GM10248 (cell line): ENCODE measurements at regions of chr17 and their contacts with region 1.

Region 1: GRCh38 chr17:46940621-46941404 is 17.9 kb downstream of the GOSR2 start:
- DNase-seq: peak; percentile 81
- CTCF ChIP-seq: peak; percentile 89

Region 2: GRCh38 chr17:46910179-46910927 is 30.5 kb before region 1 on chr17:
- CTCF ChIA-PET with region 1: interaction called, 14 read pairs
- POLR2A ChIA-PET with region 1: no interaction called
- DNase-seq: no peak
- CTCF ChIP-seq: no peak

Region 3: DNA sequence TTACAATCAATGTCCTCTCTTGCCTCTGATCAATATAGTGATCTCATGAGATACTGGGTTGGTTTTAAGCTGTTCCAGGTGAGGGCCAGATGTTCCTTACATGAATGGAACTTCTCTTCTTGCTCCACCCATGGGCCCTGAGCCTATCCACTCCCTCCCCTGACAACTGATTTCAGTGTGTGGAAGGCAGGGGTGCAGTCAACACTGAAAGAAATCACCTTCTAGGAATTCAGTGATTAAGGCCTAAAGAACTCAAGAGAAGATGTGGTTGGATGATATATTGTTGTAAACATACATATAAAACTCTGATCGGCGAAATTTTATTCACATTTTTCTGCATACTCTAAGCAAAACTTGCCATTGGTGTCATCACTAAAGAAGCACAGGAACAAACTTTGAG is 24.6 kb before region 1 on chr17:
- CTCF ChIA-PET with region 1: interaction called, 14 read pairs
- POLR2A ChIA-PET with region 1: no interaction called
- DNase-seq: no peak
- CTCF ChIP-seq: no peak

Region 4: GRCh38 chr17:46922804-46923635 is 17.8 kb before region 1 on chr17 and contains the start of gene GOSR2:
- CTCF ChIA-PET with region 1: interaction called, 23 read pairs
- POLR2A ChIA-PET with region 1: no interaction called
- DNase-seq: peak; percentile 95
- CTCF ChIP-seq: no peak

Region 5: DNA sequence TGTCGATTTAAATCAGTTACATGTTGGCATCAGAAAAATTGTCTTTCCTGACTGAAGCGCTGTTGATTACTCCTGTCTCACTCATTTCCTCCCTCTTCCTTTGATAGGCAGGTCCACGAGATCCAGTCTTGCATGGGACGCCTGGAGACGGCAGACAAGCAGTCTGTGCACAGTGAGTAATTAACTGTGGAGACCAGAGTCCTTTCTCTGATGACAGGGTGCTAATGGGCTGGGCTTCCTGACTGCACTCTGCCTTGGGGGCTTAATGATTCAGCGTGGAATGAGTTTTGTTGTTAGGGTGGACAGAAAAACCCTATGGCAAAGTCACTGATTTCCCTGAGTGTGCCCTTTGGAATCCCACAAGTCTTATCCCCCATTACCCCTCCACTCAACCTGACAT is 11.4 kb before region 1 on chr17:
- CTCF ChIA-PET with region 1: interaction called, 23 read pairs
- POLR2A ChIA-PET with region 1: no interaction called
- DNase-seq: no peak
- CTCF ChIP-seq: no peak

Region 6: DNA sequence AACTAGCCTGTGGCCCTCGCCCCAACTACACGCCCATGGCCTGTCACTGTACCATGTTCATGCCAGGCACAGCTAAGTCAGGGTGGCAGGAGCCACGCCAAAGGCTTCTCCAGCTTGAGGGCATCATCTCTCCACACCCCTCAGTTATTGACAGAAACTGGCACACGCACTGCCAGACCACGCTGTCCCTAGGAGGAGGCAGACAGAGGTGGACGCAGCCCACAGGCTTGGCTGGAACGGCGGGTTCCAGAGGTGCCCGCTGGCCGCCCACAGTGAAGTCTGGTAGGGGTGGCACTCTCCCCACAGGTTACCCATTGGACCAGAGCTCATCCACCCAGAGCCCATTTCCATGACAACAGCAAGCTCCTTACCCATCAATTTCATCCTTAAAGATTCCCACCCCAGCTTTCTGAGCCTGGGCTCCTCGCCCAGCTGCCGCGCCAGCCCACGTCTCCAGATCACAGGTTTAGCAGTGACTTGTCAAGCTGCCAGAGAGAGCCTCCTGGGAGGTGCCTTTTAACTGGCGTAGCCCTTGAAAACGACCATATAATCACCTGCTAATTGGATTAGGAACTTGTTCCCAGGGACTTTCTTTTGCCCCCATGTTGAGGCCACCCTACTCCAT is 10.3 kb after region 1 on chr17:
- CTCF ChIA-PET with region 1: interaction called, 26 read pairs
- POLR2A ChIA-PET with region 1: no interaction called
- DNase-seq: no peak
- CTCF ChIP-seq: no peak

Region 7: GRCh38 chr17:46968224-46968834 is 27.5 kb after region 1 on chr17:
- CTCF ChIA-PET with region 1: interaction called, 16 read pairs
- POLR2A ChIA-PET with region 1: no interaction called
- DNase-seq: no peak
- CTCF ChIP-seq: no peak